ENCODE measurements at regions of chr22 and their contacts with region 1.

Region 1: DNA sequence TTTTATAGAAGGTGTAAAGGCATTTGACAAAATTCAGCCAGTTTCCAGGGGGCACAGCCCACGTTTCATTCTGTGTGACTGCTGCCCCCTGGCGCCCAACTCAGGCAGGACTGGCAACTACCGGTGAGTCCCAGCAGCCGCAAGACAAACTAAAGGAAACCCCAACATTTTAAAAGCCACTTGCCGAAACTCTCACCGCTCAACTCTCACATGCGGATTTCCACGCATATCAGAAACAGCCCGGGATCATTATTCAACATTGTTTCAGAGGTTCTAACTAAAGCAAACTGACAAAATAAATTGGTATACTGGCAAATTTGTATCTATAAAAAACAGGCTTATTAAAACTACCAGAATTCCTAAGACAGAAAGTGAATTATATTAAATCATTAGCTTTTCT is 48.2 kb downstream of the MORC2 start:
- DNase-seq: peak; percentile 27
- ATAC-seq: peak; percentile 85
- H3K4me3 ChIP-seq: peak overlapping the region; percentile 50; the same call in 1 of the 2 replicates
- H3K27ac ChIP-seq: no peak overlapping the region
- H3K4me1 ChIP-seq: peaks cover 3% of the 10 kb centered on the region; the same call in 1 of the 2 replicates
- H3K27me3 ChIP-seq: no peaks in the 10 kb centered on the region
- CTCF ChIP-seq: peak; percentile 85 to 87 (median 86)
- EP300 ChIP-seq: no peak
- POLR2A ChIP-seq: no peak
- RAD21 ChIP-seq: peak; percentile 64

Region 2: DNA sequence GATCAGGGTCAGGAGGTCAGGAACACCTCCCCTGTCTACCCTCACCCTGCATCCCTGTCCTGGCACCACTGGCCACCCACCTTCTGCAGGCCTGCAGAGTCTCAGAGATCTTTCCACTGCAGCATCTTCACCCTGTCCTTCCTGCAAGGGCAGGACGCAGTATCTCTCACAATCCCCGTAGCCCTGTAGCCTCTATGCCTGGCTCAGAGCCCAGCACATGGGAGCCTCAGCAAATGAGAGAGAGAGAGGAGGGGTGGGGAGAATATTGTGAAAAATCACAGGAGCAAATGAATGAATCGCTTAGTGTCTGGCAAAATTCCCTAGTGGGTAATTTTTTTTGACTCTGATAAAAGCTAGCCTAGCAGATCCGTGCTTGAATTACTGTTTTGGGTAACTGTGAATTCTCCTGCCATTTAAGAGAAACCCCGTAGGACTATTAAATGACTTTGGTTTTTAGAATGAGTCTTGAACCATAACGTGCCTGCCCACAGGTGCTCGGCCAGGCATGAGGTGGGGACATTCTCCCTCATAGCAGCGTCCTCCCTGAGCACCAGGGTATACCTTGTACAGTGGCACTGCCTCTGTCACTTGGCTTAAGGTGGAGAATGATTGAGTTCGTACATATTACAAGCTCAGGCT is 43.4 kb before region 1 on chr22:
- CTCF ChIA-PET with region 1: no interaction called
- POLR2A ChIA-PET with region 1: no interaction called
- RAD21 ChIA-PET with region 1: no interaction called
- SMC1A ChIA-PET with region 1: no interaction called
- in situ Hi-C with region 1: no loop called
- intact Hi-C with region 1: no loop called
- DNase-seq: no peak
- ATAC-seq: peak; percentile 35
- H3K4me3 ChIP-seq: no peak overlapping the region
- H3K27ac ChIP-seq: no peak overlapping the region
- H3K4me1 ChIP-seq: no peaks in the 10 kb centered on the region
- H3K27me3 ChIP-seq: no peaks in the 10 kb centered on the region
- CTCF ChIP-seq: no peak
- EP300 ChIP-seq: no peak
- POLR2A ChIP-seq: no peak
- RAD21 ChIP-seq: no peak

Region 3: DNA sequence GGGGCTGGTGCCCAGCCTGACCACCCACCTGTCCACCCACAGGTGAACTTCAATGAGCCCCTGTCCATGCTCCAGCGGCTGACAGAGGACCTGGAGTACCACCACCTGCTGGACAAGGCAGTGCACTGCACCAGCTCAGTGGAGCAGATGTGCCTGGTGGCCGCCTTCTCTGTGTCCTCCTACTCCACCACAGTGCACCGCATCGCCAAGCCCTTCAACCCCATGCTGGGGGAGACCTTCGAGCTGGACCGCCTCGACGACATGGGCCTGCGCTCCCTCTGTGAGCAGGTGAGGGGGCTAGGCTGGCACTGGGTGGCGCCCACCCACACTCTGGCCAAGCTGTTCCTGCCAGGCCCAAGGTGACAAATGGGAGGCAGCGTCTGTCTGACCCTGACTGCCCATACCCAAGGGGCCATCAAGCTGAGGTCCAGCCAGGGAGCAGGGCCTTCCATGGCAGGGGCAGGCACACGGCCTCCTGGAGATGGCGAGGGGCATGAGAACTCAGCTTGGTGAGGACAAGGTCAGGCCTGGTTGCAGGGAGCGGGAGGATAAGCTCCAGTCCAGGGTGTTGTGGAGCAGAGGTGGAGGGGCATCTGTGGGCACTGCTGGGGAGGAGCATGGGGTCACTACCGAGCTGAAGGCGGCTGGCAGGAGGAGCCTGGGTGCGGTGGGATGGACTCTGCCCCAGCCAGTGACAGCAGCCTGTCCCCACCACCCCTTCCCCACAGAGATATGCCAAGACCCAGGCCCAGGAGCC is 29.5 kb before region 1 on chr22:
- CTCF ChIA-PET with region 1: interaction called, 13 read pairs
- POLR2A ChIA-PET with region 1: no interaction called
- RAD21 ChIA-PET with region 1: interaction called, 5 read pairs
- SMC1A ChIA-PET with region 1: no interaction called
- in situ Hi-C with region 1: no loop called
- intact Hi-C with region 1: no loop called
- DNase-seq: no peak
- ATAC-seq: peak; percentile 84
- H3K4me3 ChIP-seq: no peak overlapping the region
- H3K27ac ChIP-seq: no peak overlapping the region
- H3K4me1 ChIP-seq: no peaks in the 10 kb centered on the region
- H3K27me3 ChIP-seq: no peaks in the 10 kb centered on the region
- CTCF ChIP-seq: peak; percentile 48 to 75 (median 75)
- EP300 ChIP-seq: no peak
- POLR2A ChIP-seq: no peak
- RAD21 ChIP-seq: peak; percentile 40; the same call in 1 of the 2 replicates

Region 4: GRCh38 chr22:30908051-30908461 is 12.4 kb before region 1 on chr22:
- CTCF ChIA-PET with region 1: interaction called, 45 read pairs
- POLR2A ChIA-PET with region 1: no interaction called
- RAD21 ChIA-PET with region 1: interaction called, 5 read pairs
- SMC1A ChIA-PET with region 1: interaction called, 5 read pairs
- in situ Hi-C with region 1: no loop called
- intact Hi-C with region 1: no loop called
- DNase-seq: no peak
- ATAC-seq: no peak
- H3K4me3 ChIP-seq: no peak overlapping the region
- H3K27ac ChIP-seq: no peak overlapping the region
- H3K4me1 ChIP-seq: peaks cover 5% of the 10 kb centered on the region
- H3K27me3 ChIP-seq: no peaks in the 10 kb centered on the region
- CTCF ChIP-seq: no peak
- EP300 ChIP-seq: no peak
- POLR2A ChIP-seq: no peak
- RAD21 ChIP-seq: no peak

Region 5: DNA sequence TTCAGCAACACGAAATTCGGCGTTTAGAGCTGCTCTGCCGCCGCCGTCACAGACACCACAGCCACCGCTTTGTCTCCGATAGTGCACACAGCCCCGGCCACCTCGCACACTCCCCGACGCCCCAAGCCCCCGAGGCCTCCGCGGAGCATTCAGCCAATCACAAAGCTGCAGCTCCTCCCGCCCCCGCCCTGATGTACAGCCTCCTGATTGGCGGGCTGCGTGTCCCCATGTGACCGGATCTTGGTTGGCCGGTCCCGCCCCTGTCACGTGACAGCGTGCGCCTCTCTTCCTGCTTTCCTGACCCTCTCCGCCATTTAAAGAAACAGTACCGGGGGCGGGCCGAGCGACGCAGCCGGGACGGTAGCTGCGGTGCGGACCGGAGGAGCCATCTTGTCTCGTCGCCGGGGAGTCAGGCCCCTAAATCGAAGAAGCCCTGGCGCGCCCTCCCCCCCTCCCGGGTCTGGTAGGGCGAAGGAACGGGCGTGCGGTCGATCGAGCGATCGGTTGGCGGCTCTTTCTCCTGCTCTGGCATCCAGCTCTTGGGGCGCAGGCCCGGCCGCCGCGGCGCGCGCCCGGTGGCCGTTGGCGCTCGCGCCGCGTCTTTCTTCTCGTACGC is 48.6 kb after region 1 on chr22 and contains the start of gene TUG1:
- CTCF ChIA-PET with region 1: interaction called, 16 read pairs
- POLR2A ChIA-PET with region 1: interaction called, 7 read pairs
- RAD21 ChIA-PET with region 1: interaction called, 5 read pairs
- SMC1A ChIA-PET with region 1: interaction called, 8 read pairs
- in situ Hi-C with region 1: no loop called
- intact Hi-C with region 1: no loop called
- DNase-seq: peak; percentile 90
- ATAC-seq: peak; percentile 93
- H3K4me3 ChIP-seq: peak within 1 kb of the TSS; percentile 82
- H3K27ac ChIP-seq: peak within 1 kb of the TSS; percentile 93
- H3K4me1 ChIP-seq: peaks cover 10% of the 10 kb centered on the region
- H3K27me3 ChIP-seq: no peaks in the 10 kb centered on the region
- CTCF ChIP-seq: no peak
- EP300 ChIP-seq: no peak
- POLR2A ChIP-seq: peak; percentile 83
- RAD21 ChIP-seq: no peak
- polyA plus RNA-seq, gene TUG1: 21.6 to 23.4 TPM